ENCODE measurements at regions of chr9 and their contacts with region 1.

Region 1: DNA sequence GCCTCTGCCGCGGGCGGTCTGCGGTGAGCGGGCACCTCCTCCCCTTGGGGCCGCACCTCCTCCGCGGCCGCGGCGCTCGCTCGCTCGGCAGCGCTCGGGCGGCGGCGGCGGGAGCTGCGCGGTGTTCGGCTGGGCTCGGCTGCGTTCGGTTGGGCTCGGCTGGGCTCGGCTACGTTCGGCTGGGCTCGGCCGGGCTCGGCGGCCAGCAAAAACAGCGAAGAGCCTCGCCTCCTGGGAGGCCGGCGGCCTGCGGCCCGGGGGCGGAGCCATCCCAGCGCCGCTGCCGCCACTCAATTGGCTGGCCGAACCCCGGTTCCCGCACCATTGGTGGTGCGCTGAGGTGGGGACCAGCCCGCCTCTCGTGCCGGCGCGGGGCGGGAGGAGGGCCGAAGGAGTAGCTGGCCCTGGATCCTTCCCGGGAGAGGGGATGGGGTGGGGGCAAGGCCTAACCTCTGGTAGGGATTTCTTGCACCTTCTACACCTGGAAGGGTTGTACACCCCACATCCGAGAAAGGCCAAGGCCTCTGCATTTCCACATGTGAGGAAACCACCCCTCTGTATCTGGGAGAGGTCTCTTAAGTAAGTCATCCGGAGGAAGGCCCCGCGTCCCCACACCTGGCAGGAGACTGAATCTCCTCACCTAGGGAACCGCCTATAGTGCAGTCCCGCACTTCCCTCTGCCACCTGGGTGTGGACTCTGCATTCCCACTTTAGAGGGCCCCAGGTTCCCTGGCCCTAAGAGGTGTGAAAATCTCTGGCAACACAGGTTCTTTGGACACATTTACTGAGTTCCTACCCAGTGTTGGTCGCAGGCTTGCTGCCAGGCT is at the start of gene ENHO:
- DNase-seq: peak; percentile 77 to 97 (median 91)
- ATAC-seq: peak; percentile 97
- H3K4me3 ChIP-seq: peak within 1 kb of the TSS; percentile 66
- H3K4me3 Mint-ChIP-seq: peak within 1 kb of the TSS; percentile 70 to 83 (median 78)
- H3K27ac ChIP-seq: peak within 1 kb of the TSS; percentile 61
- H3K27ac Mint-ChIP-seq: peak within 1 kb of the TSS in 7 of 9 donors; percentile 18 to 79 (median 61)
- H3K4me1 ChIP-seq: peaks cover 7 to 10% of the 10 kb centered on the region in 2 donors
- H3K4me1 Mint-ChIP-seq: peaks cover 5 to 19% (median 10%) of the 10 kb centered on the region in 7 donors
- H3K27me3 ChIP-seq: no peaks in the 10 kb centered on the region
- H3K27me3 Mint-ChIP-seq: peaks cover 0 to 55% (median 8%) of the 10 kb centered on the region in 5 donors
- total RNA-seq, gene ENHO: 0.56 to 1.9 TPM in 2 of 5 experiments, not detected in the others

Region 2: DNA sequence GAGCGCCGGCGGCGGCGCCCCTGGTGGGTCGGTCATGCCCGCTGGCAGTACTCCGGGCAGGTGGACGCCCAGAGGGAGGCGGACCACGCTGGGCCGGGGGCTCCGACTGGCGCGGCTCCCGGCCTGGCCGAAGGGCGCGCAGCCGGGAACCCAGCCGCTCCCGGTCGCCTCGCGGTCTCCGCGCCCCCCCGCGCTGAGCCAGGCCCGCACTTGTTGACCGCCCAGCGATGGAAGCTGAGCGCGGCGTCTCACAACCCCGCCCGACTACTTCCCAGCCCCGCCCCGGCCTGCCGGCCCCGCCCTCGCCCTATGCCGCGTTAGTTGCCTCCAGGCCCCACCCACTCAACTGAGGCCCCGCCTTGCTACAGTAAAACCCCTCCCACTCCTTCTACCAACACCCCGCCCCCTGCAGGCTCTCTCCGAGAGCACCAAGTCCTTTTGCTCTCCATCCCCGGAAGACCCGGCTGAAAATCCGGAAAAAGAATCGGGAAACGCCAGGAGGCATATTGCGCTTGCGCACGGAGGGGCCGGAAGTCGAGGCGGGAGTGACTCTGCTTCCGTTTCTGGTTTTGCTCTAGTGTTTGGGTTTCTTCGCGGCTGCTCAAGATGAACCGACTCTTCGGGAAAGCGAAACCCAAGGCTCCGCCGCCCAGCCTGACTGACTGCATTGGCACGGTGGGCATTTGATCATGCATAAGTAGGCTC is 1258.6 kb before region 1 on chr9 and contains the starts of genes BAG1 and CHMP5:
- CTCF ChIA-PET with region 1: no interaction called
- POLR2A ChIA-PET with region 1: no interaction called
- intact Hi-C with region 1: loop called in 1 of 2 experiments (anchors 5 kb)
- DNase-seq: peak; percentile 98 to 100 (median 100)
- ATAC-seq: peak; percentile 99
- H3K4me3 ChIP-seq: peak within 1 kb of the TSS; percentile 95
- H3K4me3 Mint-ChIP-seq: peak within 1 kb of the TSS; percentile 82 to 98 (median 92)
- H3K27ac ChIP-seq: peak within 1 kb of the TSS; percentile 88
- H3K27ac Mint-ChIP-seq: peak within 1 kb of the TSS; percentile 84 to 99 (median 97)
- H3K4me1 ChIP-seq: peaks cover 15 to 34% of the 10 kb centered on the region in 2 donors
- H3K4me1 Mint-ChIP-seq: peaks cover 36 to 66% (median 55%) of the 10 kb centered on the region in 7 donors
- H3K27me3 ChIP-seq: no peaks in the 10 kb centered on the region
- H3K27me3 Mint-ChIP-seq: peaks cover 0 to 2% (median 0%) of the 10 kb centered on the region in 5 donors
- total RNA-seq, gene BAG1: 48.6 to 77.2 (median 61.0) TPM
- total RNA-seq, gene CHMP5: 21.4 to 74.6 (median 35.3) TPM

Region 3: GRCh38 chr9:34620061-34620994 is 97.1 kb after region 1 on chr9 and contains the start of gene DCTN3:
- CTCF ChIA-PET with region 1: no interaction called
- POLR2A ChIA-PET with region 1: interaction called, 3 read pairs
- intact Hi-C with region 1: loop called in 1 of 2 experiments (anchors 1 kb)
- DNase-seq: peak; percentile 61 to 94 (median 91)
- ATAC-seq: peak; percentile 98
- H3K4me3 ChIP-seq: peak within 1 kb of the TSS; percentile 86
- H3K4me3 Mint-ChIP-seq: peak within 1 kb of the TSS; percentile 88 to 98 (median 94)
- H3K27ac ChIP-seq: peak within 1 kb of the TSS; percentile 74
- H3K27ac Mint-ChIP-seq: peak within 1 kb of the TSS; percentile 65 to 97 (median 88)
- H3K4me1 ChIP-seq: peaks cover 12 to 30% of the 10 kb centered on the region in 2 donors
- H3K4me1 Mint-ChIP-seq: peaks cover 23 to 39% (median 32%) of the 10 kb centered on the region in 7 donors
- H3K27me3 ChIP-seq: peaks cover 3 to 31% of the 10 kb centered on the region in 2 donors
- H3K27me3 Mint-ChIP-seq: peaks cover 18 to 41% (median 27%) of the 10 kb centered on the region in 5 donors
- total RNA-seq, gene DCTN3: 55.6 to 110 (median 73.0) TPM

Region 4: DNA sequence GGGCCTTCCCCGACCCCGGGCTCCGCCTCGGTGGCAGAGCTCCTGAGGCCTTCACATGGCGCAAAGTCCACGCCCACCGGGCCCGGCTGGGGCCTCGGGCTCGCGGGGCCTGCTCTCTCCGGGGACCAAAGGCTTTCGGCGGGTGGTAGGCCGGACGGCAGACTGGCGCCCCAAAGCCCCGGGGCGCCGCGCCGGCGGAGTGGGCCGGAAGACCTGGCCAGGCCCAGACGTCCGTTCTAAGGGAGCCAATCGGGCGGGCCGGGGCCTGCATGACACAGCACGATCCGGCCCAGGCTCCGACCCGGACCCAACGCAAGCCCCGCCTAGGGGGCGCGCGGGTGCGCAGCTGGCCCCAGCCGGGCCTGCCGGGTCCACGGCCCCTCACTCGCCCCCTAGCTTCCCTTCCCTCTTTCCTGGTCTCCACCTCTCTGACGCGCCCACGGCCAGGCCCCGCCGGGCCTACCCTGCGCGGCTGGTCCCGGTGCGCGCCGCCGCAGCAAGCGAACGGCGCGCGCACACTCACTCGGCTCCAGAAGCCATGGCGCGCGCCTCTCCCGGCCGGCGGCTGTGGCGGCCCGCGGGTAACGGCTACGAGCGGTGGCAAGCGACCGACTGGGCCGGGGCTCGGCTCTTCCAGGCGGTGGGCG is 548.8 kb after region 1 on chr9:
- CTCF ChIA-PET with region 1: no interaction called
- POLR2A ChIA-PET with region 1: no interaction called
- intact Hi-C with region 1: loop called in 1 of 2 experiments (anchors 2 kb)
- DNase-seq: peak in 8 of 9 donors; percentile 67 to 83 (median 71)
- ATAC-seq: peak; percentile 70
- H3K4me3 ChIP-seq: peak overlapping the region; percentile 53
- H3K4me3 Mint-ChIP-seq: peak overlapping the region; percentile 74 to 95 (median 88)
- H3K27ac ChIP-seq: peak overlapping the region; percentile 93
- H3K27ac Mint-ChIP-seq: peak overlapping the region; percentile 81 to 96 (median 91)
- H3K4me1 ChIP-seq: peaks cover 22 to 43% of the 10 kb centered on the region in 2 donors
- H3K4me1 Mint-ChIP-seq: peaks cover 34 to 66% (median 53%) of the 10 kb centered on the region in 7 donors
- H3K27me3 ChIP-seq: no peaks in the 10 kb centered on the region
- H3K27me3 Mint-ChIP-seq: peaks cover 0 to 3% (median 0%) of the 10 kb centered on the region in 5 donors

Measured in naive thymus-derived CD4-positive, alpha-beta T cell (primary cell).